ENCODE measurements at regions of chr7 and their contacts with region 1.

Region 1: GRCh38 chr7:104643587-104644217 is 315.3 kb downstream of the LHFPL3 start:
- DNase-seq: peak; percentile 26
- ATAC-seq: peak; percentile 69
- H3K4me3 Mint-ChIP-seq: no peak overlapping the region
- H3K27ac Mint-ChIP-seq: no peak overlapping the region
- H3K4me1 Mint-ChIP-seq: peaks cover 5% of the 10 kb centered on the region; the same call in 1 of the 2 replicates
- H3K27me3 Mint-ChIP-seq: no peaks in the 10 kb centered on the region
- CTCF ChIP-seq: peak; percentile 46; the same call in 1 of the 2 replicates

Region 2: GRCh38 chr7:104529567-104529966 is 114.1 kb before region 1 on chr7:
- CTCF ChIA-PET with region 1: no interaction called
- POLR2A ChIA-PET with region 1: no interaction called
- DNase-seq: no peak
- ATAC-seq: no peak
- H3K4me3 Mint-ChIP-seq: no peak overlapping the region
- H3K27ac Mint-ChIP-seq: no peak overlapping the region
- H3K4me1 Mint-ChIP-seq: no peaks in the 10 kb centered on the region
- H3K27me3 Mint-ChIP-seq: peaks cover 4% of the 10 kb centered on the region; the same call in 1 of the 2 replicates
- CTCF ChIP-seq: no peak

Region 3: GRCh38 chr7:104627516-104627915 is 16.2 kb before region 1 on chr7:
- CTCF ChIA-PET with region 1: interaction called, 11 read pairs
- POLR2A ChIA-PET with region 1: no interaction called
- DNase-seq: peak; percentile 44
- ATAC-seq: peak; percentile 71
- H3K4me3 Mint-ChIP-seq: no peak overlapping the region
- H3K27ac Mint-ChIP-seq: no peak overlapping the region
- H3K4me1 Mint-ChIP-seq: no peaks in the 10 kb centered on the region
- H3K27me3 Mint-ChIP-seq: peaks cover 10% of the 10 kb centered on the region
- CTCF ChIP-seq: no peak

Region 4: DNA sequence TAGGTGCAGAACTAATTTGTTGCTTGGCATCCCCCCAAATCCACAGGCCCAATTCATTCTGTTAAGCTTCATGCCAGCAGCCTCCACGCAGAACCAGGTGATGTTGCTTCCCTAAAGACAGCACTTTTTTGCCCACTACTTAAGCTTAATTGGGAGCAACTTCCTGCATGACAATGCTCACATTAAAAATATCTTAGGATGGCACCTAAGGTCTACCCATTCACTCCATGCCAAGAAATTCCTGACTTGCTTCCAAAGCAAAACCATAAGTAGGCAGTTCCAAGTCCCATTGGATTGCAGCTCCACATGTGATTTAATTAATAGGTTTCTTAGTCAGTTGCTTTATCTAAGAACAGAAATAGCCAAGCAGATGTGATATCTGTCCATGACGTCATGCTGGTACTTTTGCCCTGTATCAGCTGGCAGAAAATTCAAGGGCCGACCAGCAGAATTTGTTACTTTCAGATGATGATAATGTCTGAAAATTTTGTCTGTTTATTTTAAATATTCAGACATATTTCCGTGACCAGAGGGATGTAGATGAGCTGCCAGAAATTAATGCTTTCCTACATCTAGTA is 10.2 kb after region 1 on chr7:
- CTCF ChIA-PET with region 1: interaction called, 12 read pairs
- POLR2A ChIA-PET with region 1: no interaction called
- DNase-seq: no peak
- ATAC-seq: no peak
- H3K4me3 Mint-ChIP-seq: no peak overlapping the region
- H3K27ac Mint-ChIP-seq: no peak overlapping the region
- H3K4me1 Mint-ChIP-seq: peaks cover 3% of the 10 kb centered on the region
- H3K27me3 Mint-ChIP-seq: no peaks in the 10 kb centered on the region; the same call in 1 of the 2 replicates
- CTCF ChIP-seq: no peak

Region 5: GRCh38 chr7:104848138-104848990 is 204.7 kb after region 1 on chr7:
- CTCF ChIA-PET with region 1: interaction called, 42 read pairs
- POLR2A ChIA-PET with region 1: no interaction called
- DNase-seq: peak; percentile 84
- ATAC-seq: peak; percentile 94
- H3K4me3 Mint-ChIP-seq: no peak overlapping the region
- H3K27ac Mint-ChIP-seq: no peak overlapping the region
- H3K4me1 Mint-ChIP-seq: no peaks in the 10 kb centered on the region
- H3K27me3 Mint-ChIP-seq: no peaks in the 10 kb centered on the region
- CTCF ChIP-seq: peak; percentile 96

Region 6: GRCh38 chr7:104862719-104863118 is 219.0 kb after region 1 on chr7:
- CTCF ChIA-PET with region 1: interaction called, 25 read pairs
- POLR2A ChIA-PET with region 1: no interaction called
- DNase-seq: peak; percentile 54
- ATAC-seq: peak; percentile 81; the same call in 1 of the 2 replicates
- H3K4me3 Mint-ChIP-seq: no peak overlapping the region
- H3K27ac Mint-ChIP-seq: no peak overlapping the region
- H3K4me1 Mint-ChIP-seq: no peaks in the 10 kb centered on the region
- H3K27me3 Mint-ChIP-seq: peaks cover 57% of the 10 kb centered on the region
- CTCF ChIP-seq: peak; percentile 62; the same call in 1 of the 2 replicates

Region 7: DNA sequence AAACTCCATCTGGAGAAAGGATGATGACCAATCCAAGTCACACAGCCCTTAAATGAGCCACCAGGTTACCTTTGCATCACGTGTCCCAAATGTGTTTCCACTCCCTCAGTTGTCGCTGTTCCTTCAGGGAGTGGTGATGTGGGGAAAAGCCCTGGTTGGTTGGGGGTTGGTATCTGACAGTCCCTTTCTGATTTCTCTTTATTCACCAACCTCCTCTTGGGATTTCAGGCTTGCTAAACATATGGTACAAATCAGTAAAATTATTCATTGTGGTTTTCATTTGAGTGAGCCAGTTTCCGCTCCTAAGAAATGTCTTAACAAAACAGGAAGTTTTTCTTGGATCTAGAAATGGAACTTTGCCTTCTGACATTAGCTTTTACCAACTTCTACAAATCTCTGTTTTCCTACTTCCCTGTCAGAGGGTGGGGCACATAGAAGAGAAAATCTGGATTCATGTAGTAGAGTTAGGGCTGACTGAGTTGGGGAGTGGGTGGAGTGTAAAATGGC is 330.3 kb after region 1 on chr7:
- CTCF ChIA-PET with region 1: no interaction called
- POLR2A ChIA-PET with region 1: no interaction called
- DNase-seq: no peak
- ATAC-seq: no peak
- H3K4me3 Mint-ChIP-seq: no peak overlapping the region
- H3K27ac Mint-ChIP-seq: no peak overlapping the region; the same call in 1 of the 2 replicates
- H3K4me1 Mint-ChIP-seq: peaks cover 23% of the 10 kb centered on the region
- H3K27me3 Mint-ChIP-seq: no peaks in the 10 kb centered on the region
- CTCF ChIP-seq: no peak